ENCODE measurements at regions of chr5 and their contacts with region 1.

Region 1: DNA sequence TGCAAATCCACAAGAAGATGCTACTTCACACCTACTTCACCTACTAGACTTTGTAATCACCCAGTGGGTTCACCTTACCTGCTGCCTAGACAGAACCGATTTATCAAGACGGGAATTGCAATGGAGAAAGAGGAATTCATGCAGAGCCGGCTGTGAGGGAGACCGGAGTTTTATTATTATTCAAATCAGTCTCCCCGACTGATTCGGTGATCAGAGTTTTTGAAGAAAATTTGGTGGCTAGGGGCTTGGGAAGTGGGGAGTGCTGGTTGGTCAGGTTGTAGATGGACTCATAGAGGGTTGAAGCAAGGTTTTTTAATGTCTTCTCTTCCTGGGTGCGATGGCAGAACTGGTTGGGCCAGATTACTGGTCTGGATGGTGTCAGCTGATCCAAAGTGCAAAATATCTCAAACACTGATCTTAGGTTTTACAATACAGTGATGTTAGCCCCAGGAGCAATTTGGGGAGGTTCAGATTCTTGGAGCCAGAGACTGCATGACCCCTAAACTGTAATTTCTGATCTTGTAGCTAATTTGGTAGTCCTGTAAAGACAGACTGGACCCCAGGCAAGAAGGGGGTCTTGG is 23.5 kb downstream of the SFXN1 start:
- DNase-seq: no peak
- H3K4me3 Mint-ChIP-seq: no peak overlapping the region
- H3K27ac Mint-ChIP-seq: peak overlapping the region; percentile 7
- H3K4me1 Mint-ChIP-seq: peaks cover 40% of the 10 kb centered on the region
- H3K27me3 Mint-ChIP-seq: no peaks in the 10 kb centered on the region

Region 2: GRCh38 chr5:174589604-174590003 is 912.2 kb before region 1 on chr5:
- intact Hi-C with region 1: no loop called
- DNase-seq: no peak
- H3K4me3 Mint-ChIP-seq: no peak overlapping the region
- H3K27ac Mint-ChIP-seq: no peak overlapping the region
- H3K4me1 Mint-ChIP-seq: no peaks in the 10 kb centered on the region
- H3K27me3 Mint-ChIP-seq: no peaks in the 10 kb centered on the region

Region 3: DNA sequence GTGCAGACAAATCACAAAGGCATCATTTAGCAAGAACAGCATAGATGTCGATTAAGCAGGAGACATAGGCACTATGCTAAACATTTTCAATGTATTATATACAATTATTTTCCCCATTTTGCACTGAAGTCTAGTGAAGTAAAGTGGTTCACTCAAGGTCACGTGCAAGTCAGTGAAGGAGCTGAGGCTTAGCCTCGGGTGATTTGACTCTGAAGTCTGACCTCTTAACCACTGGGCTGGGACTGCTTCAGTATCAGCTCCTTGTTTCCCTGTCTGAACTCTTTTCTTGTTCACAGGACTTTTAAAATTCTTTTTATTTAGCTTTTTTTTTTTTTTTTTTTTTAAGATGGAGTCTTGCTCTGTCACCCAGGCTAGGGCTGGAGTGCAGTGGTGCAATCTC is 320.5 kb before region 1 on chr5:
- intact Hi-C with region 1: no loop called
- DNase-seq: no peak
- H3K4me3 Mint-ChIP-seq: no peak overlapping the region
- H3K27ac Mint-ChIP-seq: no peak overlapping the region
- H3K4me1 Mint-ChIP-seq: no peaks in the 10 kb centered on the region
- H3K27me3 Mint-ChIP-seq: peaks cover 6% of the 10 kb centered on the region

Region 4: DNA sequence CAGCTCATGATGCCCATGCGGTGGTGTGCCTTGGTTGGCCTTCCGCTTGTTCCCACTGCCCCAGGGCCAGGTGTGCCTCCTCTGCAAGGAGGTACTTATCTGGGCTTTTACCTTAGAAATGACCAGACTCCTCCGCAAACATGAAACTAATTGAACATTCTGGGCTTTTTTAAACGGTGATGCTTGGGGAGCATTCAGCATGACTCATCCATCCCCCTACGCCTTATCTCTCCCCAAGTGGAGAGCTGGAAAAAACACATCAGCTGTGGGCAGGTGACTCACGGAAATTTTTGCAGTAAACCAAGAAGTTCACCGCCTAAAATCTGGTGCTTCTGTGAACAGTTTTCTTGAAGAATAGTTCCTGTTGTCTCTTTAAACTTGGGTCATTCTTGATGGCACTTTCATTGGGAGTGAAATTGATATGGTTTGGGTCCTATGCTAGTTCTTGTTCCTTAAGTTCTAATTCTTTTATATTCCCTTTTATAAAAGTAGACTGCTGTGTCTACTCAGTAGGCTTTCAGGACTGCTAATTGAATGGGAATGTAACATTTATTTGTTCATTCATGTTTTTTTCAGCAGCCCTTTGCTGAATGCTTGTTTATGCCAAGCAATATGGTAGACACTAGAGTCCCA is 16.1 kb after region 1 on chr5:
- intact Hi-C with region 1: loop called (anchors 1 kb)
- DNase-seq: peak; percentile 91
- H3K4me3 Mint-ChIP-seq: peak overlapping the region; percentile 73
- H3K27ac Mint-ChIP-seq: peak overlapping the region; percentile 95
- H3K4me1 Mint-ChIP-seq: peaks cover 79% of the 10 kb centered on the region
- H3K27me3 Mint-ChIP-seq: peaks cover 2% of the 10 kb centered on the region